Activated CD8-positive, alpha-beta T cell treated with anti-CD3 and anti-CD28 coated beads for 36 hours (primary cell): ENCODE measurements at regions of chr9 and their contacts with region 1.

Region 1: GRCh38 chr9:113657703-113658544 is 194.4 kb downstream of the RGS3 start:
- DNase-seq: peak; percentile 88
- ATAC-seq: peak; percentile 98
- H3K4me3 Mint-ChIP-seq: no peak overlapping the region
- H3K27ac Mint-ChIP-seq: no peak overlapping the region
- H3K4me1 Mint-ChIP-seq: peaks cover 6% of the 10 kb centered on the region
- H3K27me3 Mint-ChIP-seq: peaks cover 7% of the 10 kb centered on the region
- CTCF ChIP-seq: peak; percentile 95

Region 2: GRCh38 chr9:112647596-112647995 is 1010.3 kb before region 1 on chr9:
- CTCF ChIA-PET with region 1: no interaction called
- POLR2A ChIA-PET with region 1: no interaction called
- intact Hi-C with region 1: no loop called
- DNase-seq: no peak
- ATAC-seq: no peak
- H3K4me3 Mint-ChIP-seq: no peak overlapping the region
- H3K27ac Mint-ChIP-seq: no peak overlapping the region
- H3K4me1 Mint-ChIP-seq: no peaks in the 10 kb centered on the region
- H3K27me3 Mint-ChIP-seq: no peaks in the 10 kb centered on the region
- CTCF ChIP-seq: no peak

Region 3: GRCh38 chr9:113401027-113401792 is 256.7 kb before region 1 on chr9 and contains the start of gene ALAD:
- CTCF ChIA-PET with region 1: interaction called, 91 read pairs
- POLR2A ChIA-PET with region 1: no interaction called
- intact Hi-C with region 1: no loop called
- DNase-seq: peak; percentile 99
- ATAC-seq: peak; percentile 100
- H3K4me3 Mint-ChIP-seq: peak within 1 kb of the TSS; percentile 91
- H3K27ac Mint-ChIP-seq: peak within 1 kb of the TSS; percentile 81
- H3K4me1 Mint-ChIP-seq: peaks cover 12% of the 10 kb centered on the region
- H3K27me3 Mint-ChIP-seq: no peaks in the 10 kb centered on the region
- CTCF ChIP-seq: peak; percentile 99
- total RNA-seq, gene ALAD: 16.2 to 16.3 TPM

Region 4: GRCh38 chr9:113454914-113455761 is 202.8 kb before region 1 on chr9:
- CTCF ChIA-PET with region 1: interaction called, 193 read pairs
- POLR2A ChIA-PET with region 1: no interaction called
- intact Hi-C with region 1: no loop called
- DNase-seq: peak; percentile 22
- ATAC-seq: no peak
- H3K4me3 Mint-ChIP-seq: no peak overlapping the region
- H3K27ac Mint-ChIP-seq: peak overlapping the region; percentile 18
- H3K4me1 Mint-ChIP-seq: peaks cover 8% of the 10 kb centered on the region
- H3K27me3 Mint-ChIP-seq: no peaks in the 10 kb centered on the region
- CTCF ChIP-seq: no peak

Region 5: DNA sequence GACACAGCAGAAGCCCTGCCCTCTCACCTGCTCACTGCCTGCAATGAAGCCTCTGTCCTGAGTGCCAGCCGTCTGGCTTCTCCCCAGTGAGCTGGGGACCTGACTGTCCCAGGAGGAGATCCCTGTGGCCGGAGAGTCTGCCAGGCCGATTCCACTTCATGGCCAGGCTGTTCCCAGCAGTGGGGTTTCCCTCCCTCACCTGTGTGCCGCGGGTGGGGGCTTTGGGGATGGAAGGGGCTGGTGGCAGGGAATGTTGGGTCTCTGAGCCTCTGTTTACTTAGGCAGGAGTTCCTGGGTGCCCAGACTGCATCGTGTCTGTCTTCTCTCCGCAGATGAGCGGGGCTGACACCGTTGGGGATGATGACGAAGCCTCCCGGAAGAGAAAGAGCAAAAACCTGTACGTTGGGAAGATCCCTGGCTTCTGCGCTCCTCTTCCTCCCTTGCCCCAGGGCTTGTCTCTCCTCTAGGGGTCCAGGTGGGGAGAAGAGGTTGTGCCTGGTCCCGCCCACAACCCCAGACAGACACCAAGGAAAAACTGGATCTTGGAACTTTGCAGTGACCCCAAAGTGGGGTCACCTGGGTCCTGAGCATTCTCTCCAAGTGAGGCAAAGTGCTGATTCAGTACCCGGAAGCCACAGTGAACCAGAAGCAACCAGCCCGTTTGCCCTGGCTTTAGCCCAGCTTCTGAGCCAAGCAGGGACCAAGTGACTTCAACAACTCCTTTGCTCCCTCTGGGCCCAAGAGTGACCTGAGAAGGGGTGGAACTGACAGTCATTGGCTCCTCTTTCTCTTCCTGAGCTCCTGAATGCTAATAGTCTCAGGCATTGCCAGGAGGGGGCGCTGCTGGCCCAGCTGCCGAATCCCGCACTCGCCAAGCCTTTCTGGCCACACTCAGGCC is 66.7 kb before region 1 on chr9:
- CTCF ChIA-PET with region 1: interaction called, 621 read pairs
- POLR2A ChIA-PET with region 1: interaction called, 9 read pairs
- intact Hi-C with region 1: loop called (anchors 2 kb)
- DNase-seq: peak; percentile 86
- ATAC-seq: peak; percentile 77
- H3K4me3 Mint-ChIP-seq: no peak overlapping the region
- H3K27ac Mint-ChIP-seq: peak overlapping the region; percentile 33
- H3K4me1 Mint-ChIP-seq: peaks cover 40% of the 10 kb centered on the region
- H3K27me3 Mint-ChIP-seq: no peaks in the 10 kb centered on the region
- CTCF ChIP-seq: peak; percentile 88

Region 6: GRCh38 chr9:113632776-113633590 is 24.9 kb before region 1 on chr9:
- CTCF ChIA-PET with region 1: interaction called, 21 read pairs
- POLR2A ChIA-PET with region 1: no interaction called
- intact Hi-C with region 1: no loop called
- DNase-seq: peak; percentile 67
- ATAC-seq: peak; percentile 75
- H3K4me3 Mint-ChIP-seq: no peak overlapping the region
- H3K27ac Mint-ChIP-seq: no peak overlapping the region
- H3K4me1 Mint-ChIP-seq: peaks cover 2% of the 10 kb centered on the region
- H3K27me3 Mint-ChIP-seq: peaks cover 2% of the 10 kb centered on the region
- CTCF ChIP-seq: no peak

Region 7: DNA sequence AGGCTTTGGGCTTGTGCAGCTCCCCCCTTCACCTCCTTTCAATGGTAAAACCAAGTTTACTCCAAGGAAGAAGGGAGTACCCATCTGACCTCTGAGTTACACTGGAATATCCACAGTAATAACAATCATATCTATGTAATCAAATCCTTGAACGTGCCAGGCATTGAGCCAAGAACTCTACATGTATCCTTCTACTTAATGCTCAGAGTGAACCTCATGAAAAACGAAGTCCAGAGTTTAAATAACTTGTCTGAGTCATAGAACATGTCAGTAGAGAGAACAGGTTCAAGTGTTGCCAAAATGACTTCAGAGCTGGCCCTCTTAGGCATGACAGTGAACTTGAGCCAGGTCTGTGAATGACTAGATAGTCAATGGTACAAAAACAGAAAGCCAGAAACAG is 54.1 kb after region 1 on chr9:
- CTCF ChIA-PET with region 1: no interaction called
- POLR2A ChIA-PET with region 1: no interaction called
- intact Hi-C with region 1: no loop called
- DNase-seq: no peak
- ATAC-seq: no peak
- H3K4me3 Mint-ChIP-seq: no peak overlapping the region
- H3K27ac Mint-ChIP-seq: no peak overlapping the region
- H3K4me1 Mint-ChIP-seq: no peaks in the 10 kb centered on the region
- H3K27me3 Mint-ChIP-seq: peaks cover 6% of the 10 kb centered on the region
- CTCF ChIP-seq: no peak

Region 8: DNA sequence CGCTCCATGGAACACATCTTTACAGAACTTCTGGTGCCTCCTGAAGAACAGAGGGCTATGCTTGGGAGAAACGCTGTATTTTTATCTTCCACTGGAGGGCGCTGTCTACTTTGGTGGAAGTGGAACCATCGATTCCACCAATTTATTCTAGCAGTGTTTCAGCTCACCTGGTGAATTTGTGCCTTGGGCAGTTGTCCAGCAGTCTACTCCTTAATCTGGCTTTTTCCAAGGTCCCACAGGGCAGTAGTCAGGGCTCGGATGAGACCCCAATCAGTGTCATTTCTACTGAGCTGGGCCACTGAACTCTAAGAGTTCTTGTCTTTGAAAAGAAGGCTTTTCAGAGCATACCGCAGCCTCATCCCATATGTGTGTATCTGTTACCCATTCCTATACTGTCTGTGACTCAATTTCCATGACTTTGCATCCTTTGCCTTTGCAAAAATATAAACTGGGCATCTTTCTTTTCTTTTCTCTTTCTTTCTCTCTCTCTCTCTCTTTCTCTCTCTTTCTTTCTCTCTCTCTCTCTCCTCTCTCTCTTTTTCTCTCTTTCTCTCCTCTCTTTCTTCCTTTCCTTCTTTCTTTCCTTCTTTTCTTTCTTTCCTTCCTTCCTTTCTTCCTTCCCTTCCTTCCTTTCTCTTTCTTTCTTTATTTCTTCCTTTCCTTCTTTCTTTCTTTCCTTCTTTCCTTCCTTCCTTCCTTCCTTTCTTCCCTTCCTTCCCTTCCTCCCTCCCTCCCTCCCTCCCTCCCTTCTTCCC is 79.8 kb after region 1 on chr9:
- CTCF ChIA-PET with region 1: no interaction called
- POLR2A ChIA-PET with region 1: no interaction called
- intact Hi-C with region 1: no loop called
- DNase-seq: peak; percentile 58
- ATAC-seq: peak; percentile 50
- H3K4me3 Mint-ChIP-seq: no peak overlapping the region
- H3K27ac Mint-ChIP-seq: no peak overlapping the region
- H3K4me1 Mint-ChIP-seq: no peaks in the 10 kb centered on the region
- H3K27me3 Mint-ChIP-seq: peaks cover 8% of the 10 kb centered on the region
- CTCF ChIP-seq: peak; percentile 66